ENCODE measurements at regions of chr5 and their contacts with region 1.

Region 1: DNA sequence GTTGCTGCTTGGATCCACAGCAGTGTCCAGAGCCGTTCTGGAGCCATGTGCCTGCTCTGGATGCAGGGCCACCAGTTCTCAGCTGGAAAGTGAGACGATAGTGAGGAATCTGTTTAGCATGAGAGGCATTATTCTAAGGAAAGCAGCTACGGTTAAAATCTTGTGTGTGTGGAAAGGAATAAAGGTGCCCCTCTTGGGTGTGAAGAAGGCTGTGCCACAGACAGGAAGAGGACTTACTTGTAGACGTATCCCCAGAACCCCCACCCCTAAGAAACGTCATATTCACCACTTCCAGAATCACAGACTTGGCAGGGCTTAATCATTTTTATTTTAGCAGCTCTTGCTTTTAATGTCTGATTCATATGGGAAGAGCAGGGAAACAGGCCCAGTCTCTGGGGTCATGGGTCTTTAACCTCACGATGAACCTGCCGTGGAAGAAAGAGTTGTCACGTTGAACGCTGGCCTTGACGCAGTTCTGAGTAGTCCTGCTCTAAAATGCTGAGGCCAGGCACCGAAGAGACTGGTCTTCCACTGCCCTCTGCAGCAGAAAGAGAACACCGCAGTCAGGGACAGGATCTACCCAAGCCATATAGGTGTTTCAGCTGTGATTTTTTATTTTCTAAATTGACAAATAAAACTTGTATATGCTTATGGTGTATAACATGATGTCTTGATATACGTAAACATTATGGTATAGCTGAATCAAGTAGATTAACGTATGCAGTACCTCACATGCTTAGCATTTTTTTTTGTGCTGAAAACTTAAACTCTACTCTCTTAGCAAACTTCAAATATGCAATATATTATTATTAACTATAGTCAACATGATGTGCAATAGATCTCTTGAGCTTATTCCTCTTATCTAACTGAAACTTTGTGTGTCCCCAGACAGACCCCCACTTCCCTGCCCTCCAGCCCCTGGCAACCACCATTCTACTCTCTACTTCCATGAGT is 38.8 kb downstream of the CARTPT start:
- DNase-seq: peak; percentile 65
- H3K4me3 ChIP-seq: no peak overlapping the region
- H3K27ac ChIP-seq: no peak overlapping the region
- H3K4me1 ChIP-seq: peaks cover 0 to 5% (median 0%) of the 10 kb centered on the region in 4 donors
- H3K27me3 ChIP-seq: no peaks in the 10 kb centered on the region
- CTCF ChIP-seq: peak; percentile 63 to 82 (median 78)
- EP300 ChIP-seq: no peak
- POLR2A ChIP-seq: no peak

Region 2: DNA sequence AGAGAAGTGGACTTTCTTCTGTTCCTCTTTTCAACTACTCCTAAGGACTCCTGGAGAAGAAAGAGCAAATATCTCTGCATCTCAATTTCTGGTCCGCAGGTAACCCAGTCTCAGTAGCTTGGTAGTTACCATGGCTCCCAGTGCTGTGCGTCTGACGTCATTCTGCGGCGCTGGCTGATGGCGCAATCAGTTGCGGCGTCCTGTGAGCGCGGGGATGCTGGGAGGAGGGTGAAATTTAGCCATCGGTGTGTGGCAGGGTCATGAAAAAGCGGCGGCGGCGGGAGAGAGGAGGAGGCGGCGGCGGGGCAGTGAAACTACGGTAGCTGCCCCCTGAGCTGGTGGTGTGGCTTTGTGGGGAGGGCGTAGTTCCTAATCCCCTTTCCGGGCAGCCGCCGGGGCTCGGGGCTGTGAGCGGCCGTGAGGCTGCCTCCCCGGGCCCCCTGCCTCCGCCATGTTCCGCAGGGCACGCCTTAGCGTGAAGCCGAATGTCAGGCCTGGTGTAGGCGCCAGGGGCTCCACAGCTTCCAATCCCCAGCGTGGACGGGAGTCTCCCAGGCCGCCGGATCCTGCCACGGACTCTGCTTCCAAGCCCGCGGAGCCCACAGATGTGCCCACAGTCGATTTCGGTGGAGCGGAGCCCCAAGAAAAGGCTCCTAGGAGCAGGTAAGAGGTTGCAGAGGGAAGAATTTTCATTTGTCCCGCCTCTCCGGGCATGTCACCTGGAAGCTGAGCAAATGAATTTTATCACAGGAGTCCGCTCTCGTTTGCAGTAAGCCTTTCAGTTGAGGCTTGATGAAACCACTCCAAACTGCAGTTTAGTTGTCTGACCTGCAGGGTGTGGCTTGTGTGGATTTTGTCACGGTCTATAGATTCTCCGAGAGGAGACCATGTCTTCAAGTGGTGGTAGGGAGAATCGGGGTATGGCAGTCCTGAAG is 302.2 kb before region 1 on chr5 and contains the start of gene BDP1:
- in situ Hi-C with region 1: loop called in 1 of 4 experiments (anchors 25 kb)
- intact Hi-C with region 1: no loop called
- DNase-seq: peak; percentile 98
- H3K4me3 ChIP-seq: peak within 1 kb of the TSS; percentile 69 to 79 (median 73)
- H3K27ac ChIP-seq: peak within 1 kb of the TSS; percentile 89 to 98 (median 93)
- H3K4me1 ChIP-seq: peaks cover 0 to 26% (median 18%) of the 10 kb centered on the region in 4 donors
- H3K27me3 ChIP-seq: peaks cover 8% of the 10 kb centered on the region
- CTCF ChIP-seq: peak; percentile 20 to 50 (median 36)
- EP300 ChIP-seq: no peak
- POLR2A ChIP-seq: peak; percentile 81
- total RNA-seq, gene BDP1: 30.9 to 69.1 (median 47.5) TPM

Region 3: GRCh38 chr5:71873191-71873591 is 115.3 kb after region 1 on chr5:
- in situ Hi-C with region 1: no loop called
- intact Hi-C with region 1: no loop called
- DNase-seq: no peak
- H3K4me3 ChIP-seq: no peak overlapping the region
- H3K27ac ChIP-seq: no peak overlapping the region
- H3K4me1 ChIP-seq: no peaks in the 10 kb centered on the region
- H3K27me3 ChIP-seq: no peaks in the 10 kb centered on the region
- CTCF ChIP-seq: no peak
- EP300 ChIP-seq: no peak
- POLR2A ChIP-seq: no peak

Region 4: GRCh38 chr5:71938895-71939294 is 181.0 kb after region 1 on chr5:
- in situ Hi-C with region 1: no loop called
- intact Hi-C with region 1: no loop called
- DNase-seq: peak; percentile 72
- H3K4me3 ChIP-seq: no peak overlapping the region
- H3K27ac ChIP-seq: peak overlapping the region in 3 of 4 donors; percentile 5 to 21 (median 14)
- H3K4me1 ChIP-seq: peaks cover 0 to 13% (median 9%) of the 10 kb centered on the region in 4 donors
- H3K27me3 ChIP-seq: no peaks in the 10 kb centered on the region
- CTCF ChIP-seq: no peak
- EP300 ChIP-seq: no peak
- POLR2A ChIP-seq: no peak